Caco-2 (cell line): ENCODE measurements at regions of chr12 and their contacts with region 1.

Region 1: GRCh38 chr12:132908145-132909044 is 21.0 kb upstream of the CHFR start:
- DNase-seq: peak; percentile 91 to 95
- H3K4me3 ChIP-seq: peak overlapping the region; percentile 57
- H3K4me3 Mint-ChIP-seq: peak overlapping the region; percentile 73
- H3K27ac Mint-ChIP-seq: peak overlapping the region; percentile 48
- H3K4me1 ChIP-seq: no peaks in the 10 kb centered on the region
- H3K4me1 Mint-ChIP-seq: no peaks in the 10 kb centered on the region
- H3K27me3 ChIP-seq: no peaks in the 10 kb centered on the region
- H3K27me3 Mint-ChIP-seq: no peaks in the 10 kb centered on the region
- CTCF ChIP-seq: no peak

Region 2: GRCh38 chr12:132887513-132888351 is 20.7 kb before region 1 on chr12 and contains the start of gene CHFR:
- CTCF ChIA-PET with region 1: no interaction called
- POLR2A ChIA-PET with region 1: no interaction called
- intact Hi-C with region 1: loop called (anchors 2 kb)
- DNase-seq: peak; percentile 89 to 93
- H3K4me3 ChIP-seq: peak within 1 kb of the TSS; percentile 63
- H3K4me3 Mint-ChIP-seq: peak within 1 kb of the TSS; percentile 93
- H3K27ac Mint-ChIP-seq: peak within 1 kb of the TSS; percentile 99
- H3K4me1 ChIP-seq: no peaks in the 10 kb centered on the region; the same call in 1 of the 2 replicates
- H3K4me1 Mint-ChIP-seq: no peaks in the 10 kb centered on the region
- H3K27me3 ChIP-seq: no peaks in the 10 kb centered on the region
- H3K27me3 Mint-ChIP-seq: no peaks in the 10 kb centered on the region
- CTCF ChIP-seq: no peak
- total RNA-seq, gene CHFR: 28.0 and 32.3 TPM in 2 replicates